Endothelial cell of umbilical vein (primary cell): ENCODE measurements at regions of chr3 and their contacts with region 1.

Region 1: DNA sequence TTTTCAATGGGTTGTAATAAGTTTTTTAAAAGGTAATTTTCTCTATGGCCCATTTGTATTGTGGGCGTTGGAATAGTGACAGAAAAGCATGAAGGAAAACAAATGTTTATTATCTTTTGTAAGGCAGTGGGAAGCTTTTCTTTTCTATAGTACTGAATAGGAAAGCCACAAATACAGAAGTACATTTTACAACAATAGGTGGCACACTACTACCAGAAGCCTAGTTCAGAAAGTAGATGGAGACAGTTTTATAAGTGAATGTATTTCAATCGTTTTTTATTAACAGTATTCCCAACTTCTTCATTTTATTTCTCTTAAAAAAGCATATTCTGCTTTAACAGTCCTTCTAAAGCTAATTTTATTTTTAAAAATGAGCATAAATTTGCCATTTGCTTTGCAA is 296.7 kb downstream of the PTPRG start:
- DNase-seq: peak; percentile 57
- H3K4me3 ChIP-seq: no peak overlapping the region
- H3K27ac ChIP-seq: no peak overlapping the region
- H3K4me1 ChIP-seq: no peaks in the 10 kb centered on the region
- H3K27me3 ChIP-seq: no peaks in the 10 kb centered on the region
- CTCF ChIP-seq: peak; percentile 6 to 34
- POLR2A ChIP-seq: no peak

Region 2: GRCh38 chr3:61841111-61841853 is 16.8 kb before region 1 on chr3:
- CTCF ChIA-PET with region 1: interaction called, 10 read pairs
- POLR2A ChIA-PET with region 1: interaction called, 12 read pairs
- dilution Hi-C with region 1: no loop called
- intact Hi-C with region 1: no loop called
- DNase-seq: peak; percentile 87
- H3K4me3 ChIP-seq: peak overlapping the region in 1 of 3 experiments; percentile 4
- H3K27ac ChIP-seq: peak overlapping the region; percentile 8
- H3K4me1 ChIP-seq: peaks cover 7% of the 10 kb centered on the region
- H3K27me3 ChIP-seq: no peaks in the 10 kb centered on the region
- CTCF ChIP-seq: no peak
- POLR2A ChIP-seq: no peak

Region 3: GRCh38 chr3:61847784-61848462 is 10.1 kb before region 1 on chr3:
- CTCF ChIA-PET with region 1: interaction called, 10 read pairs
- POLR2A ChIA-PET with region 1: no interaction called
- dilution Hi-C with region 1: no loop called
- intact Hi-C with region 1: no loop called
- DNase-seq: peak; percentile 50
- H3K4me3 ChIP-seq: no peak overlapping the region
- H3K27ac ChIP-seq: no peak overlapping the region
- H3K4me1 ChIP-seq: peaks cover 25% of the 10 kb centered on the region
- H3K27me3 ChIP-seq: no peaks in the 10 kb centered on the region
- CTCF ChIP-seq: no peak
- POLR2A ChIP-seq: no peak

Region 4: GRCh38 chr3:62051507-62051906 is 193.5 kb after region 1 on chr3:
- CTCF ChIA-PET with region 1: interaction called, 31 read pairs
- POLR2A ChIA-PET with region 1: no interaction called
- dilution Hi-C with region 1: no loop called
- intact Hi-C with region 1: loop called (anchors 2 kb)
- DNase-seq: peak; percentile 61
- H3K4me3 ChIP-seq: no peak overlapping the region
- H3K27ac ChIP-seq: no peak overlapping the region
- H3K4me1 ChIP-seq: no peaks in the 10 kb centered on the region
- H3K27me3 ChIP-seq: no peaks in the 10 kb centered on the region
- CTCF ChIP-seq: peak; percentile 44 to 45
- POLR2A ChIP-seq: no peak